Dendritic cell treated with granulocyte-macrophage colony-stimulating factor and Interleukin-4, amounts not matched to agents 40 ng/mL and 50 ng/mL, for 4 days (primary cell): ENCODE measurements at regions of chr6 and their contacts with region 1.

Region 1: GRCh38 chr6:132813173-132813856 is 1.1 kb upstream of the RPS12 start:
- H3K4me3 Mint-ChIP-seq: peak overlapping the region; percentile 97
- H3K27ac Mint-ChIP-seq: peak overlapping the region; percentile 99
- H3K4me1 Mint-ChIP-seq: peaks cover 39% of the 10 kb centered on the region
- H3K27me3 Mint-ChIP-seq: peaks cover 10% of the 10 kb centered on the region

Region 2: GRCh38 chr6:132798869-132799538 is 14.3 kb before region 1 on chr6:
- intact Hi-C with region 1: loop called (anchors 2 kb)
- H3K4me3 Mint-ChIP-seq: peak overlapping the region; percentile 79
- H3K27ac Mint-ChIP-seq: peak overlapping the region; percentile 60
- H3K4me1 Mint-ChIP-seq: peaks cover 5% of the 10 kb centered on the region
- H3K27me3 Mint-ChIP-seq: no peaks in the 10 kb centered on the region

Region 3: DNA sequence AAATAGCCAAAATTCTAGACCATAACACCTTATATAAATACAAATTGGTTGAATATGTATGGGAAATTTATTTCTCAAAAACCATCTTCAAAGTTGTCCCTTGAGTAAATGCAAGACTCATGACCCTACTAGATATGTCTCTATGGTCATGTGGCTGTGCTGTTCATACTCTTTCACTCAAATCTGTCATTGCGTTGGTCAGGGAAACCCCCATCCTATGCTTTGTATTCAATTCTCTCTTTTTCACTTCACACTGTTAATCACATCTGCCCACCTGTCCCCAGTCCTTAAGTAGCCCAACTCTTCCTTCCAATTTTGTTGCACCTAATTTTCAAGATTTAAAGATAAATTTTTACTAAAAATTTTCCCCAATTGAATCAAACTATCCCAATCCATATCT is 52.0 kb after region 1 on chr6:
- intact Hi-C with region 1: no loop called
- H3K4me3 Mint-ChIP-seq: no peak overlapping the region
- H3K27ac Mint-ChIP-seq: no peak overlapping the region
- H3K4me1 Mint-ChIP-seq: no peaks in the 10 kb centered on the region
- H3K27me3 Mint-ChIP-seq: no peaks in the 10 kb centered on the region